Activated T-helper 2 cell treated with anti-CD3 and anti-CD28 coated beads, Interferon-gamma antibody, Interleukin-2, Interleukin-4, amounts not matched to agents 10 μg/mL and 5 μg/mL and 100 μg/mL, durations not matched to agents 14 hours and 24 hours and 36 hours (primary cell): ENCODE measurements at regions of chrX and their contacts with region 1.

Region 1: DNA sequence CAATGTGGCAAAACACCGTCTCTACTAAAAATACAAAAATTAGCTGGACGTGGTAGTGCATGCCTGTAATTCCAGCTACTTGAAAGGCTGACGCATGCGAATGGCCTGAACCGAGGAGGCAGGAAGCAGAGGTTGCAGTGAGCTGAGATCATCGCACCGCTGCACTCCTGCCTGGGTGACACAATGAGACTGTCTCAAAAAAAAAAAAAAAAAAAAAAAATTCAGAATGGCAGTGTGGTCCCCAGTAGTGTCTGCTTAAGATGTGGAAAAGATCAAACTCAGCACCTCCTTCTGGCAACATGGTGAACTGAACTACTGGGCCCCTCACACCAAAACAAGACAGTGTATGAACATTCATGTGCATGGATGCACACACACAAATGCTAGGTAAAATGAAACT is 32.2 kb downstream of the SMS start:
- DNase-seq: peak; percentile 13
- H3K4me3 Mint-ChIP-seq: no peak overlapping the region
- H3K27ac Mint-ChIP-seq: peak overlapping the region; percentile 82
- H3K4me1 Mint-ChIP-seq: peaks cover 35% of the 10 kb centered on the region
- H3K27me3 Mint-ChIP-seq: no peaks in the 10 kb centered on the region

Region 2: GRCh38 chrX:21940356-21940829 is 32.3 kb before region 1 on chrX and contains the start of gene SMS:
- intact Hi-C with region 1: loop called (anchors 2 kb)
- DNase-seq: peak; percentile 24
- H3K4me3 Mint-ChIP-seq: peak within 1 kb of the TSS; percentile 87
- H3K27ac Mint-ChIP-seq: peak within 1 kb of the TSS; percentile 93
- H3K4me1 Mint-ChIP-seq: peaks cover 31% of the 10 kb centered on the region
- H3K27me3 Mint-ChIP-seq: no peaks in the 10 kb centered on the region
- total RNA-seq, gene SMS: 143 TPM in 2 replicates

Region 3: DNA sequence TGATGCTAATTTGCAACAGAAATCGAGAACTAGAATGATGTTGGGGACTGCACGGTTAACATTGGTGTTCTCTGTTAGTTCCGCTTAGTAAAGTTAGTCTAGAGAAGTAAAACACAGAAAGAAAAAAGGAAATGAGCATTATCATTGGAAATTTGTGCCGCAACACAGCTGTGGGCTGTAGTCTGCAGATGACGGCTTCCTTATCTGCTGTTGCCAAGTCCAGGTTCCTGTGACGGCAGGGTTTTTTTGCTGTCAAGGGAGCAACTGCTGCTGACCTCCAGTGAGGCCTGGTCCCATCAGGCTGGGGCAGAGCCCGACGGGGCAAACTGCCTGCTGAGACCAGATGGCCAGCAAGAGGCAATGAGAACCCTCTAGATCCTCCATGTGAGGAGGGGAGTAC is 20.5 kb after region 1 on chrX:
- intact Hi-C with region 1: no loop called
- DNase-seq: no peak
- H3K4me3 Mint-ChIP-seq: no peak overlapping the region
- H3K27ac Mint-ChIP-seq: no peak overlapping the region
- H3K4me1 Mint-ChIP-seq: peaks cover 30% of the 10 kb centered on the region
- H3K27me3 Mint-ChIP-seq: no peaks in the 10 kb centered on the region